GM10248 (cell line): ENCODE measurements at regions of chr12 and their contacts with region 1.

Region 1: DNA sequence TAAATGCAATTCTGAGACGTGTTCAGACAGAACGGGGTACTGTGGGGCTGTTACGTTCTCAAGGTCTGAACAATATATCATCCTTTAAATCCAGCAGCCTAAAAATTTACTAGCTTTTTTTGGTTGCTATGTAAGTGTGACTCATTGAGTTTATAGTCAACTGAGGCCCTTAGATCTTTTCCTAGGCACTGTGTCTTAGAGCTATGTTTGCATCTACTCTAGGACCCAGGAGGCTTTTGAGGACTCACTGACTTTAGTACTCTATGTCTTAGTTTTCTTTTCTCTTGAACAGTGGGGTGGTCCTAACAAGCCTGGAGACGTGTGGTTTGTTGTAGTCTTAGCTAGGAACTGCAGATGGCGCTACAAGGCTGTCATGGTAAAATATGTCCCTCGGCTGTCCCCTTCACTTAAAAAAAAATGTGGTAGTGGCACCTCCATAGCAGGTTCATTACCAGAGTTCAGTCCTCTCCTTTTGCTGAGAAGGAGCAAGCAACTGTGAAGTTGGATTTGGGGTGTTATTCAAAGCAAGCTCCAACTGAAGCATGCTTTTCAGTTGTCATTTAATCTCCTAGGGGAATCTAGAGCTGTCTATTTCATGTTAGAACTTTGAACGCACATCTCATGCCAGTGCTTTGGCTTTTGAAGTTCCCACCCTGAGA is 8.7 kb upstream of the SPATS2 start:
- DNase-seq: peak; percentile 70
- CTCF ChIP-seq: peak; percentile 69

Region 2: GRCh38 chr12:49170924-49171323 is 187.7 kb before region 1 on chr12:
- CTCF ChIA-PET with region 1: no interaction called
- POLR2A ChIA-PET with region 1: no interaction called
- DNase-seq: no peak
- CTCF ChIP-seq: no peak

Region 3: GRCh38 chr12:49331380-49332222 is 27.0 kb before region 1 on chr12:
- CTCF ChIA-PET with region 1: interaction called, 39 read pairs
- POLR2A ChIA-PET with region 1: no interaction called
- DNase-seq: peak; percentile 16
- CTCF ChIP-seq: peak; percentile 70

Region 4: GRCh38 chr12:49388682-49389386 is 30.2 kb after region 1 on chr12:
- CTCF ChIA-PET with region 1: interaction called, 16 read pairs
- POLR2A ChIA-PET with region 1: no interaction called
- DNase-seq: peak; percentile 45
- CTCF ChIP-seq: peak; percentile 27

Region 5: GRCh38 chr12:49496417-49497360 is 138.1 kb after region 1 on chr12:
- CTCF ChIA-PET with region 1: interaction called, 11 read pairs
- POLR2A ChIA-PET with region 1: no interaction called
- DNase-seq: no peak
- CTCF ChIP-seq: no peak

Region 6: GRCh38 chr12:49553512-49554088 is 195.0 kb after region 1 on chr12:
- CTCF ChIA-PET with region 1: interaction called, 43 read pairs
- POLR2A ChIA-PET with region 1: no interaction called
- DNase-seq: peak; percentile 67
- CTCF ChIP-seq: peak; percentile 56

Region 7: GRCh38 chr12:49623142-49623904 is 264.7 kb after region 1 on chr12 and contains the start of gene PRPF40B:
- CTCF ChIA-PET with region 1: interaction called, 26 read pairs
- POLR2A ChIA-PET with region 1: interaction called, 3 read pairs
- DNase-seq: peak; percentile 96
- CTCF ChIP-seq: peak; percentile 70